ENCODE measurements at regions of chr1 and their contacts with region 1.

Region 1: DNA sequence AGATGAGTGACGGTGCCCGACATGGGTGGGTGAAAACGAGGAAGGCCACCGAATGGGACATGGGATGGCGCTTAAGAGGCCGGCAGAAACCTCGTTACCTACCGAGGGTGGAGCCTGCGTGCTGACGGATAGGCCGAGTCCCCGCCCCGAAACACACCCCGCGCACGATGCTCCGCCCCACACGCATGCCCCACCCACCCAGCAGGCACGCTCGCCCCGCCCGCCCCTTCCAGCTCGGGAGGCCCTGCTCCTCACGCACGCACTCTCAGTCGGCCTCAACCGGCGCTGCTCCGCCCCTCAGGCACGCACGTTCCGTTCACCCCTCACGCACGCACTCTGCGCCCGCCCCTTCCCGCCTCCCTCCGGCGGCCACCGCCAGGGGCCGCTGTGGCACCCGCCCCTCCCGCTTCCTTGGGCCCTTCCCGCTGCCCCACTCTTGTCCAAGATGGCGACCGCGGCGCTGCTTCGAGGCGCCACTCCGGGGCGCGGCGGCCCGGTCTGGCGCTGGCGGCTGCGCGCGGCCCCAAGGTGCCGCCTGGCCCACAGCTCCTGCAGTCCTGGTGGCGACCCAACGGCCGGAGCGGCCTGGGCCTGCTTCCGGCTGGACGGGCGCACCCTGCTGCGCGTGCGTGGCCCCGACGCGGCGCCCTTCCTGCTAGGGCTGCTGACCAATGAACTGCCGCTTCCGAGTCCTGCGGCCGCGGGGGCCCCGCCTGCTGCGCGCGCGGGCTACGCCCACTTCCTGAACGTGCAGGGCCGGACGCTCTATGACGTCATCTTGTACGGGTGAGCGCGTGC is at the start of gene IBA57:
- DNase-seq: peak; percentile 96 to 99
- ATAC-seq: peak; percentile 82 to 90
- H3K4me3 ChIP-seq: peak within 1 kb of the TSS; percentile 66
- H3K27ac ChIP-seq: peak within 1 kb of the TSS; percentile 97 to 100
- H3K4me1 ChIP-seq: peaks cover 11% of the 10 kb centered on the region; the same call in 2 of the 3 replicates
- CTCF ChIP-seq: peak; percentile 94
- EP300 ChIP-seq: peak in 1 of 2 experiments; percentile 15; a peak in 1 of 5 replicates
- POLR2A ChIP-seq: peak; percentile 82
- RAD21 ChIP-seq: no peak; a peak in 1 of 5 replicates
- polyA plus RNA-seq, gene IBA57: 1.5 TPM in 2 replicates

Region 2: GRCh38 chr1:228120857-228121489 is 44.6 kb before region 1 on chr1:
- CTCF ChIA-PET with region 1: interaction called, 13 read pairs
- POLR2A ChIA-PET with region 1: interaction called, 6 read pairs
- DNase-seq: no peak
- ATAC-seq: 0 out of 6 replicates have a peak, but pooled peaks of 1 of the 2 experiments have one; percentile 40
- H3K4me3 ChIP-seq: no peak overlapping the region
- H3K27ac ChIP-seq: no peak overlapping the region
- H3K4me1 ChIP-seq: no peaks in the 10 kb centered on the region
- CTCF ChIP-seq: no peak
- EP300 ChIP-seq: no peak
- POLR2A ChIP-seq: no peak
- RAD21 ChIP-seq: no peak

Region 3: GRCh38 chr1:228131766-228132165 is 33.8 kb before region 1 on chr1:
- CTCF ChIA-PET with region 1: interaction called, 48 read pairs
- POLR2A ChIA-PET with region 1: interaction called, 15 read pairs
- DNase-seq: no peak
- ATAC-seq: no peak
- H3K4me3 ChIP-seq: no peak overlapping the region
- H3K27ac ChIP-seq: no peak overlapping the region
- H3K4me1 ChIP-seq: no peaks in the 10 kb centered on the region
- CTCF ChIP-seq: no peak
- EP300 ChIP-seq: no peak
- POLR2A ChIP-seq: no peak
- RAD21 ChIP-seq: no peak

Region 4: DNA sequence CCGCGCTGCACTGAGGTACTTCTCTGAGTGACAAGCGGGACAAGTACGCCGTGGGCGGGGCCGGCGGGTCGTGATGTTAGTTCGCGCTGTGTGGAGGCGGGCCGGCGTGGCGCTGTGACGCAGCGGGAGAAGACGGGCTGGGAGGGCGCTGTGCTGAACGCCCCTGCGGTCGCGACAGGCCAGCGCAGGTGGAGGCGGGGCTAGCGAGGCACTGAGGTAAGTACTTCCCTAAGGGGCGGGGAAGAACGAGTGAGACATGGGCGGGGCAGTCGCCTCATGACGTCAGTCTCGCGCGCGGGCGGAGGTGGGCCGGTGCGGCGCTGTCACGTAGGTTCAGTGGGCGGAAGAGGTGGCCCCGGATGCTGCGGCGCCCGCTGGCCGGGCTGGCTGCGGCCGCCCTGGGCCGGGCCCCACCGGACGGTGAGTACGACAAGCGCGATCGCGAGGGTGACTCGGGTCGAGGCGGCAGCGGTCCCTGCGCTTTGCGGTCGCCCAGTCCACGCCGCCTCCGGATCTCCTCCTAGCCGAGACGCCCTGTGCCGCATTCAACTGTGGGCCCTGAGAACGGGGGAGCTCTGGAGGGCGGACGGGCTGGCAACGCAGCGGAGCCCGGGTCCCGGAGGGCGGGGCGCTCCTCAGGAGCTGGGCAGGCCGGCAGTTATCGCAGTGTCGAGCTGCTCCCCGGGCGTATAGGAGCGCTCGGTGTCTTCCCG is 25.5 kb before region 1 on chr1 and contains the start of gene GUK1:
- CTCF ChIA-PET with region 1: interaction called, 5 read pairs
- POLR2A ChIA-PET with region 1: interaction called, 19 read pairs
- DNase-seq: peak; percentile 97 to 100
- ATAC-seq: peak; percentile 92 to 95
- H3K4me3 ChIP-seq: peak within 1 kb of the TSS; percentile 85
- H3K27ac ChIP-seq: peak within 1 kb of the TSS; percentile 84 to 94
- H3K4me1 ChIP-seq: peaks cover 14% of the 10 kb centered on the region
- CTCF ChIP-seq: peak; percentile 19; the same call in 2 of the 3 replicates
- EP300 ChIP-seq: no peak
- POLR2A ChIP-seq: peak; percentile 93
- RAD21 ChIP-seq: no peak
- polyA plus RNA-seq, gene GUK1: 65.2 and 88.9 TPM in 2 replicates

Region 5: GRCh38 chr1:228150461-228151179 is 15.0 kb before region 1 on chr1:
- CTCF ChIA-PET with region 1: interaction called, 89 read pairs
- POLR2A ChIA-PET with region 1: interaction called, 35 read pairs
- DNase-seq: no peak
- ATAC-seq: peak; percentile 17 to 26; a peak in 4 of 6 replicates
- H3K4me3 ChIP-seq: no peak overlapping the region
- H3K27ac ChIP-seq: no peak overlapping the region
- H3K4me1 ChIP-seq: peaks cover 5% of the 10 kb centered on the region; the same call in 1 of the 3 replicates
- CTCF ChIP-seq: no peak
- EP300 ChIP-seq: no peak
- POLR2A ChIP-seq: no peak
- RAD21 ChIP-seq: no peak

Region 6: DNA sequence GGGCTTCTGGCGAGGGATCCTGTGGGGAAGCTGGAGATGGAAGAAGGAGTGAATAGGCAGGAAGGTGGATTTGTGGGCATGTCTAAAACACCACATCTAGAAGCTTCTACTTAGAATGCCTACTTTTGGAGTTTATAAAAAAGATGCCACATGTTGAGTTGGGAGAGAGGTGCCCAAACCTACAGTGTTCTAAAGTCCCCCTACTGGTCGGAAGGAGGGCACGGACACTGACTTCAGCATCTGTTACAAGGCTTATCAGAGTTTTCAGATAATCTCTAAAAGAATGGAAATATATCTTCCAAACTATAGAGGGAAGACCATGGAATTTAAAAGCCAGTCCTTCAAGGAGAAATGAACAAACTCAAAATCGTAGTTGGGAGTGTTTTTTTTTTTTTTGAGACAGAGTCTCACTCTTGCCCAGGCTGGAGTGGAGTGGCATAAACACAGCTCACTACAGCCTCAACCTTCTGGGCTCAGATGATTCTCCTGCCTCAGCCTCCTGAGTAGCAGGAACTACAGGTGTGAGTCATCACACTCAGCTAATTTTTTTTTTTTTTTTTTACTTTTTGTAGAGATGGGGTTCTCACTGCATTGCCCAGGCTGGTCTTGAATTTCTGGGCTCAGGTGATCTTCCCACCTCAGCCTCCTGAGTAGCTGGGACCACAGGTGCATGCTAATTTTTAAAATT is 14.8 kb after region 1 on chr1:
- CTCF ChIA-PET with region 1: interaction called, 11 read pairs
- POLR2A ChIA-PET with region 1: interaction called, 6 read pairs
- DNase-seq: peak in 1 of 2 experiments; percentile 43
- ATAC-seq: peak; percentile 52 to 70; a peak in 5 of 6 replicates
- H3K4me3 ChIP-seq: no peak overlapping the region
- H3K27ac ChIP-seq: no peak overlapping the region
- H3K4me1 ChIP-seq: no peaks in the 10 kb centered on the region
- CTCF ChIP-seq: peak; percentile 23; the same call in 1 of the 3 replicates
- EP300 ChIP-seq: no peak
- POLR2A ChIP-seq: no peak
- RAD21 ChIP-seq: no peak

Region 7: DNA sequence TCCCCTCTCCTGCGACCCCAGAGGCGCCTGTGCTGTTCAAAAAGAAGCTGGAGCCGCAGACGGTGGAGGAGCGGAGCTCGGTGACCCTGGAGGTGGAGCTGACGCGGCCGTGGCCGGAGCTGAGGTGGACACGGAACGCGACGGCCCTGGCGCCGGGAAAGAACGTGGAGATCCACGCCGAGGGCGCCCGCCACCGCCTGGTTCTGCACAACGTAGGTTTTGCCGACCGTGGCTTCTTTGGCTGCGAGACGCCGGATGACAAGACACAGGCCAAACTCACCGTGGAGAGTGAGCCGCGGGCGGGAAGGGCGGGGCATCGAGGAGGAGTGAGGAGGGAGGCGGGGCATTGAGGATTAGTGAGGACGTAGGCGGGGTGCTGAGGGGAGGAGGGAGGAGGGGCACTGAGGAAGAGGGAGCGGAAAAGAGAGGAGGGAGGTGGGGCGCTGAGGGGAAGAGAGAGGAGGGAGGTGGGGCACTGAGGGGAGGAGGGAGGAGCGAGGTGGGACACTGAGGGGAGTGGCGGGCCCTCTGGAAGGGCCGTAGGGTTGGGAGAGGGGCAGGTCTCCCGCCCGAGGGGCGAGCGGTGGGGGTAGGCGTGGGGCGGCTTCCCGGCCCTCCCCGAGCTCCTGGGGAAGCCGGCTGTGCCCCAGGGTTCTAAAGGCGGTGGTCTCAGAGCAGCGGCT is 110.3 kb after region 1 on chr1:
- CTCF ChIA-PET with region 1: no interaction called
- POLR2A ChIA-PET with region 1: no interaction called
- DNase-seq: no peak
- ATAC-seq: no peak
- H3K4me3 ChIP-seq: no peak overlapping the region
- H3K27ac ChIP-seq: no peak overlapping the region
- H3K4me1 ChIP-seq: no peaks in the 10 kb centered on the region
- CTCF ChIP-seq: no peak
- EP300 ChIP-seq: no peak
- POLR2A ChIP-seq: no peak
- RAD21 ChIP-seq: no peak

Region 8: DNA sequence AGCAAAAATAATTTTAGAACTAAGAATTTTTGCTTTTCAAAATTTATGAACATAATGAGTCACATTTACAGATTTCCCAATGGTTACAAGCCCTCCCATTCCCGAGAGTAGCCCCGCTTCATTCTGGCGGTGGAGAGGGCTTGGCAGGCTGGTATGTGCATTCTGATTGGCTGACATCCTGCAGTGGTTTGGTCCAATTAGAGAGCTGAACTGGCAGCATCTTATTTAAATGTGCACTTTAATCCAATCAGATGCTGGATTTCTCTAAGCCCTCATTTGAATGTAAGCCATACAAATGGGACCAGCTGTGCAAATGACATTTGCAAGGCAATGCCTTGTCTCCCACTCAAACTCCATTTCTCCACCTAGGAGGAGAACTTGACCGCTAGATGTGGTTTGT is 269.1 kb after region 1 on chr1:
- CTCF ChIA-PET with region 1: no interaction called
- POLR2A ChIA-PET with region 1: no interaction called
- DNase-seq: peak in 1 of 2 experiments; percentile 24
- ATAC-seq: peak; percentile 9 to 35; a peak in 2 of 6 replicates
- H3K4me3 ChIP-seq: no peak overlapping the region
- H3K27ac ChIP-seq: no peak overlapping the region
- H3K4me1 ChIP-seq: no peaks in the 10 kb centered on the region
- CTCF ChIP-seq: no peak
- EP300 ChIP-seq: no peak
- POLR2A ChIP-seq: no peak
- RAD21 ChIP-seq: no peak

Measured in A549 (cell line).